ENCODE measurements at regions of chr12 and their contacts with region 1.

Region 1: DNA sequence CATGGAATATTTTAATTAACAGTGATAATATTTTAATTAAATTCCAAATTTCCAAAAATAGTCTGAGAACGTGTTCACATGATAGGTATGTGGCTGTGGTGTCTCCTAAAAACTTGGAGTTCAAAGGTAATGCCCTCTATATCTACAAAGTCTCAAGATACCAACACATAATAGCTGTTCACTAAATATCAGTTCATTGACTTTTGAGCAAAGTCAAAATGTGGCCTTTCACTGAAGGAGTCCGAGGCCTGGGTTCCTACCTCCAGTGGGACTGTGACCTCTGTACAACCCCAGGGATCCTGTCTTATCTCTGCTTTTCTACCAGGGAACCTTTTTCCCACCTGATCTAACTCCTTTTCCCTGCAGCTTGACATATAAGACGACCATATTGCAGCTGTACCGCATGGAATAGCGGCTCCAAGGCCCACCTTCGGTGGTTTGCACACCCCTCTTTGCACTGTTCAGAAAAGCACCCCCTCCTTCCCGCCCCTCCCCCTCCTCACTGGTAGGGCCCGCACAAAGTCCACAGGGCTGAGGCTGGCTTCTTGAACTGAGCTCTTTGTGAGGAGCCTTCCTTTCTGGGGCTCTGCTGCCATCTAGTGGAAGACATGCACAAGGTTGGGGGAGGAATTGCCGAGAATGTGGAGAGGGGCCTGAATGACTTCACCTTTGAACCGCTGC is 3.1 kb downstream of the CCND2 start:
- DNase-seq: peak; percentile 91
- ATAC-seq: peak; percentile 50
- H3K4me3 Mint-ChIP-seq: peak overlapping the region; percentile 91
- H3K27ac Mint-ChIP-seq: peak overlapping the region; percentile 92
- H3K4me1 Mint-ChIP-seq: peaks cover 61% of the 10 kb centered on the region
- H3K27me3 Mint-ChIP-seq: peaks cover 5% of the 10 kb centered on the region; the same call in 1 of the 2 replicates
- CTCF ChIP-seq: peak; percentile 90

Region 2: GRCh38 chr12:3885277-3886094 is 391.2 kb before region 1 on chr12:
- CTCF ChIA-PET with region 1: interaction called, 27 read pairs
- POLR2A ChIA-PET with region 1: no interaction called
- DNase-seq: no peak
- ATAC-seq: no peak
- H3K4me3 Mint-ChIP-seq: no peak overlapping the region
- H3K27ac Mint-ChIP-seq: no peak overlapping the region
- H3K4me1 Mint-ChIP-seq: peaks cover 20% of the 10 kb centered on the region
- H3K27me3 Mint-ChIP-seq: no peaks in the 10 kb centered on the region; the same call in 1 of the 2 replicates
- CTCF ChIP-seq: peak; percentile 57; the same call in 1 of the 2 replicates

Region 3: DNA sequence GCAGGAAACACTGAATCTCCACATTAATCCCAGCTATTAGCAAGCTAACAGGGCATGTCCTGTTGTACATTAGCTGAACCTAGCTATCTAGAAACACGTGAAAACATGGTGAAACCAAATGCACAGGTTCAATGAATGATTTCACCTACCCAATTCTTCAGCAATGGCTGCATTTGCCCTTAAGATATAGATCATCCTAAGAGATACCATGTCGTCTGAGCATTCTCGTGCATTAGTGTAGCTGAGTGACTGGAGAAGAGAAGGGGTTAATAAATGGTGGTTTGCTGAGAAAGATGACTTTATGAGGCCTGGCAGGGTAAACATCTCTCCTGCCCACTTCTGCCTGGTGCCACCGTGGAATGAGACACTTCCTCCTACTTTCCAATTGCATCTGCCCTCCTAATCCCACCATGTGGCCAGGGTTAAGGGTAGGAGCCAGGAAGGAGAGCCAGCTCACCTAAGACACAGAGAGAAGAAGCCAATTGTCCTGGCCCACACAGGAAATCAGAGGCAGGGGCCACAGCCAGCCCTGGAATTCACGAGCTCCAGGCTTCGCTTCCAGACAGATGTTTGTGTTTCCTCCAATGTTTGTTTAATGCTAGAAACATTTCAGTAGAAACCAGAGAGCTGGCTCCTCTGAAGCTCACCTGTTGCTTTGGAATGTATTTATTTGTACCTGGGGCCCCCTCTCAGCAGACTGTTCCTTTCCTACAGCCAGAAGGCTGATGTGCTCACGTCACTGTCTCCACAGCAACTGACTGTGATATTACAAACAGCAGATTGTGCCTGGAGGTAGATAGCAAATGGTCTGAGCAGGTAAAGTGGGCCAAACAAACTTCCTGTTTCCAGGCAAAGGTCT is 277.5 kb before region 1 on chr12:
- CTCF ChIA-PET with region 1: interaction called, 20 read pairs
- POLR2A ChIA-PET with region 1: no interaction called
- DNase-seq: no peak
- ATAC-seq: no peak
- H3K4me3 Mint-ChIP-seq: no peak overlapping the region
- H3K27ac Mint-ChIP-seq: no peak overlapping the region
- H3K4me1 Mint-ChIP-seq: peaks cover 25% of the 10 kb centered on the region
- H3K27me3 Mint-ChIP-seq: peaks cover 14% of the 10 kb centered on the region
- CTCF ChIP-seq: no peak

Region 4: GRCh38 chr12:4037747-4038312 is 238.8 kb before region 1 on chr12:
- CTCF ChIA-PET with region 1: interaction called, 47 read pairs
- POLR2A ChIA-PET with region 1: interaction called, 4 read pairs
- DNase-seq: peak; percentile 30
- ATAC-seq: peak; percentile 58
- H3K4me3 Mint-ChIP-seq: no peak overlapping the region
- H3K27ac Mint-ChIP-seq: no peak overlapping the region
- H3K4me1 Mint-ChIP-seq: peaks cover 26% of the 10 kb centered on the region
- H3K27me3 Mint-ChIP-seq: peaks cover 23% of the 10 kb centered on the region
- CTCF ChIP-seq: peak; percentile 47

Region 5: DNA sequence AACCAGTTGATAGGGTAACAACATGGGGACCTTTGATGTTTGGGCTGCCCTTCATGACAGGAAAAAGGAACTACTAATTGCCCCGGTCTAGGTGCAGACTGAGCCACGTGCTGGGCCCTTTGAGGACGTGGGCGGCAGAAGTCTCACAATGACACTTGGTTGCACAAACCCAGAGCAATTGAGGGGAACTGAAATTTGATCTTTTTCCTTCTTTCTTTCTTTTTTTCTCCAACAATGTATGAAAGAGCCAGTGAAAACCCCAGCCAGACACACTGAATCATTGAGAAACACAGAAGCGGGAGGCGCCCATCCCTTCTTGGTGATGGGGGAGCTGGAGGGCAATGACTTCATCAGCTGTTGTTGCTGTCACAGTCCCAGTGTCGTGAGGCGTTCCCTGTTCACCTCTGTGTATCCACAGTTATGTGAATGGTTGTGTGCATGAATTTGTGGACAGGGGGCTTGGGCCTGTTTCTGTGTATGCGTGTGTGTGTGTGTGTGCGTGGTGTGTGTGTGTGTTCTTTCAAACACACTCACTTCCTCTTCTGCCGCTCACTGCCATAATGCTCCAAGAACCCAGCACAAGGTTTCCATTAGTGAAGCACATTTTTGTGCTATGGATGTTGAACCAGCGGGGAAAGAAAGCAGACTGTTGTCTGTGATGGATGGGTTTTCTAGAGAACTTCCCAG is 140.6 kb before region 1 on chr12:
- CTCF ChIA-PET with region 1: interaction called, 31 read pairs
- POLR2A ChIA-PET with region 1: interaction called, 45 read pairs
- DNase-seq: no peak
- ATAC-seq: no peak
- H3K4me3 Mint-ChIP-seq: peak overlapping the region; percentile 55; the same call in 1 of the 2 replicates
- H3K27ac Mint-ChIP-seq: peak overlapping the region; percentile 97
- H3K4me1 Mint-ChIP-seq: peaks cover 74% of the 10 kb centered on the region
- H3K27me3 Mint-ChIP-seq: no peaks in the 10 kb centered on the region
- CTCF ChIP-seq: no peak

Region 6: DNA sequence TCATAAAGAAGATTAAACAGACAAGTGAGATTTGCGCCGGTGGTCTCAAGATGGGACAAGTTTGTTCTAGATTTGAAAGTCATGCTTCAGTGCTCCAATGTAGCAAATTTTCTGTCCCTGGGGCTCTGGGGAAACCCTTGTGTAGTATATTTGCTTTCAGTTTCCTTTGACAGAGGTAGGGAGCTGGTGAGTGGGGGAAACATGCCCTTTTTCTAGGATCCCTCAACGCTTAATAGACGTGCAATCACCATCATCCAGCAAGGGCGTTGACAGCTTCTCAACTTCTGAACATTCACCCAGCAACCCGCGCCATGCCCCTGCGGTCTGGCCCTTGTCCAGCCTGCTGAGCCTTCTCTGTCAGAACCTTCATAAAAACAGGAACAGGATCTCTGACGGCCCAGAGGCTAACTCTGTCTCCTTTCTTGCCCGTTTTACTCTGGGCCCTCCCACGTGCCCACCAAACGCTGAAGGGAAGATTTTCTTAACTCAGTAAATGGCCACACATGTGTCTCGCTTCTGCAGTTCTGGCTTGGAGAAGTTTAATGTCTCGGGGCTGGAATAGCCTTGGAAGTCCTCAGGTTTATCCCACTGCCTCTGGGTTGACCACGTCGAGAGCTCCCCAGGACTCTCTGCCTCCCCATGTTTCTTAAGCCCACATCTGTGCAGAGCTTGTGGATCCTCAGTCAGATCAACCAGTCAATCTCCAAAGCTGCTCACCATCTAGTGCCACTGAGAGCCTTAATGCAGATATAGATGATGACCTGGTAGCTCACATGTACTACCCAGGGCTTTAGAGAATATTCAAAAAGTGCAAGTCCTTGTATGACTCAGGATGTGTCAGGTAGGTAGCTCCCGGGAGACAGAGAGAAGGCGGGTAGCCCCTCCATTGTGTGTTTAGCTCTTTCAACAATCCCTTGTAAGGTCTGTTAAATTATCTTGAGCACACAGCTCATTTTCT is 61.2 kb before region 1 on chr12:
- CTCF ChIA-PET with region 1: interaction called, 10 read pairs
- POLR2A ChIA-PET with region 1: no interaction called
- DNase-seq: no peak
- ATAC-seq: no peak
- H3K4me3 Mint-ChIP-seq: no peak overlapping the region
- H3K27ac Mint-ChIP-seq: no peak overlapping the region
- H3K4me1 Mint-ChIP-seq: peaks cover 14% of the 10 kb centered on the region
- H3K27me3 Mint-ChIP-seq: peaks cover 6% of the 10 kb centered on the region; the same call in 1 of the 2 replicates
- CTCF ChIP-seq: no peak

Region 7: GRCh38 chr12:4293299-4293965 is 16.8 kb after region 1 on chr12:
- CTCF ChIA-PET with region 1: interaction called, 12 read pairs
- POLR2A ChIA-PET with region 1: interaction called, 6 read pairs
- DNase-seq: peak; percentile 1
- ATAC-seq: no peak
- H3K4me3 Mint-ChIP-seq: no peak overlapping the region
- H3K27ac Mint-ChIP-seq: peak overlapping the region; percentile 96
- H3K4me1 Mint-ChIP-seq: peaks cover 45% of the 10 kb centered on the region
- H3K27me3 Mint-ChIP-seq: no peaks in the 10 kb centered on the region
- CTCF ChIP-seq: no peak

Region 8: GRCh38 chr12:4477129-4477528 is 200.5 kb after region 1 on chr12:
- CTCF ChIA-PET with region 1: no interaction called
- POLR2A ChIA-PET with region 1: no interaction called
- DNase-seq: no peak
- ATAC-seq: no peak
- H3K4me3 Mint-ChIP-seq: no peak overlapping the region
- H3K27ac Mint-ChIP-seq: no peak overlapping the region
- H3K4me1 Mint-ChIP-seq: no peaks in the 10 kb centered on the region
- H3K27me3 Mint-ChIP-seq: no peaks in the 10 kb centered on the region; the same call in 1 of the 2 replicates
- CTCF ChIP-seq: no peak

Measured in WTC11 (cell line).